Heart right ventricle (tissue), 16 donors: ENCODE measurements at regions of chr1 and their contacts with region 1.

Region 1: GRCh38 chr1:67937651-67938050 is 104.4 kb upstream of the GNG12 start:
- DNase-seq: no peak
- ATAC-seq: peak in 6 of 8 donors; percentile 32 to 63 (median 45)
- H3K4me3 ChIP-seq: no peak overlapping the region
- H3K27ac ChIP-seq: peak overlapping the region in 2 of 10 donors; percentile 60 to 70
- H3K4me1 ChIP-seq: peaks cover 5 to 31% (median 14%) of the 10 kb centered on the region in 9 donors
- H3K27me3 ChIP-seq: no peaks in the 10 kb centered on the region
- CTCF ChIP-seq: no peak

Region 2: GRCh38 chr1:67874501-67875111 is 63.0 kb before region 1 on chr1:
- intact Hi-C with region 1: loop called in 1 of 10 experiments (anchors 10 kb)
- DNase-seq: no peak
- ATAC-seq: no peak
- H3K4me3 ChIP-seq: no peak overlapping the region
- H3K27ac ChIP-seq: no peak overlapping the region
- H3K4me1 ChIP-seq: no peaks in the 10 kb centered on the region
- H3K27me3 ChIP-seq: no peaks in the 10 kb centered on the region
- CTCF ChIP-seq: no peak

Region 3: GRCh38 chr1:67921725-67922489 is 15.7 kb before region 1 on chr1:
- intact Hi-C with region 1: no loop called
- DNase-seq: no peak
- ATAC-seq: no peak
- H3K4me3 ChIP-seq: no peak overlapping the region
- H3K27ac ChIP-seq: no peak overlapping the region
- H3K4me1 ChIP-seq: no peaks in the 10 kb centered on the region
- H3K27me3 ChIP-seq: no peaks in the 10 kb centered on the region
- CTCF ChIP-seq: no peak

Region 4: GRCh38 chr1:68074472-68074871 is 136.8 kb after region 1 on chr1:
- intact Hi-C with region 1: no loop called
- DNase-seq: no peak
- ATAC-seq: no peak
- H3K4me3 ChIP-seq: no peak overlapping the region
- H3K27ac ChIP-seq: no peak overlapping the region
- H3K4me1 ChIP-seq: no peaks in the 10 kb centered on the region
- H3K27me3 ChIP-seq: no peaks in the 10 kb centered on the region
- CTCF ChIP-seq: no peak